ENCODE measurements at regions of chr16 and their contacts with region 1.

Region 1: GRCh38 chr16:20900299-20901067 is at the starts of genes DCUN1D3 and LYRM1:
- DNase-seq: peak; percentile 92
- H3K4me3 Mint-ChIP-seq: peak within 1 kb of the TSS; percentile 84
- H3K27ac Mint-ChIP-seq: peak within 1 kb of the TSS; percentile 91
- H3K4me1 Mint-ChIP-seq: peaks cover 73% of the 10 kb centered on the region
- H3K27me3 Mint-ChIP-seq: no peaks in the 10 kb centered on the region

Region 2: GRCh38 chr16:20826039-20826566 is 74.4 kb before region 1 on chr16:
- CTCF ChIA-PET with region 1: no interaction called
- DNase-seq: no peak
- H3K4me3 Mint-ChIP-seq: no peak overlapping the region
- H3K27ac Mint-ChIP-seq: no peak overlapping the region
- H3K4me1 Mint-ChIP-seq: peaks cover 19% of the 10 kb centered on the region
- H3K27me3 Mint-ChIP-seq: no peaks in the 10 kb centered on the region

Region 3: GRCh38 chr16:20874088-20874581 is 26.3 kb before region 1 on chr16:
- CTCF ChIA-PET with region 1: interaction called, 11 read pairs
- DNase-seq: peak; percentile 45
- H3K4me3 Mint-ChIP-seq: peak overlapping the region; percentile 52
- H3K27ac Mint-ChIP-seq: peak overlapping the region; percentile 96
- H3K4me1 Mint-ChIP-seq: peaks cover 77% of the 10 kb centered on the region
- H3K27me3 Mint-ChIP-seq: no peaks in the 10 kb centered on the region

Region 4: DNA sequence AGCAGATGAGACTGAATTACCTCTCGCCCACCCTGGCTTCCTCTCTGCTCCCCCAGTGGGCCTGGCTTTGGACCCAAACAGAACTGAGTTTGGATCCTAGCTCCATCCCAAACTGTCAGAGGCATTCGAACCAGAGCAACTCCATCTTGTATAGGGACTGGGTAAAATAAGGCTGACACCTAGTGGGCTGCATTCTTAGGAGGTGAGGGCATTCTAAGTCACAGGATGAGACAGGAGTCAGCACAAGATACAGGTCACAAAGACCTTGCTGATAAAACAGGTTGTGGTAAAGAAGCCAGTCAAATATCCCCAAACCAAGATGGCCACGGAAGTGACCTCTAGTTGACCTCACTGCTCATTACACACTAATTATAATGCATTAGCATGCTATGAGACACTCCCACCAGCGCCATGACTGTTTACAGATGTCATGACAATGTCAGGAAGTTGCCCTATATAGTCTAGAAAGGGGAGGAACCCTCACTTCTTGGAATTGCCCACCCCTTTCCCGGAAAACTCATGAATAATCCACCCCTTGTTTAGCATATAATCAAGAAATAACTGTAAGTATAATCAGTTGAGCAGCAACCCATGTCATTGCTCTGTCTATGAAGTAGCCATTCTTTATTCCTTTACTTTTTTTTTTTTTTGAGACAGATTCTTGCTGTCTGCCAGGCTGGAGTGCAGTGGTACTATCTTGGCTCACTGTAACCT is 44.5 kb after region 1 on chr16:
- CTCF ChIA-PET with region 1: interaction called, 10 read pairs
- DNase-seq: peak; percentile 69
- H3K4me3 Mint-ChIP-seq: no peak overlapping the region
- H3K27ac Mint-ChIP-seq: no peak overlapping the region
- H3K4me1 Mint-ChIP-seq: peaks cover 41% of the 10 kb centered on the region
- H3K27me3 Mint-ChIP-seq: peaks cover 15% of the 10 kb centered on the region

Measured in activated naive CD4-positive, alpha-beta T cell treated with anti-CD3 and anti-CD28 coated beads, Interleukin-2, amount 10 ng/mL, durations not matched to agents 7 days and 5 days (primary cell).